ENCODE measurements at regions of chr1 and their contacts with region 1.

Region 1: DNA sequence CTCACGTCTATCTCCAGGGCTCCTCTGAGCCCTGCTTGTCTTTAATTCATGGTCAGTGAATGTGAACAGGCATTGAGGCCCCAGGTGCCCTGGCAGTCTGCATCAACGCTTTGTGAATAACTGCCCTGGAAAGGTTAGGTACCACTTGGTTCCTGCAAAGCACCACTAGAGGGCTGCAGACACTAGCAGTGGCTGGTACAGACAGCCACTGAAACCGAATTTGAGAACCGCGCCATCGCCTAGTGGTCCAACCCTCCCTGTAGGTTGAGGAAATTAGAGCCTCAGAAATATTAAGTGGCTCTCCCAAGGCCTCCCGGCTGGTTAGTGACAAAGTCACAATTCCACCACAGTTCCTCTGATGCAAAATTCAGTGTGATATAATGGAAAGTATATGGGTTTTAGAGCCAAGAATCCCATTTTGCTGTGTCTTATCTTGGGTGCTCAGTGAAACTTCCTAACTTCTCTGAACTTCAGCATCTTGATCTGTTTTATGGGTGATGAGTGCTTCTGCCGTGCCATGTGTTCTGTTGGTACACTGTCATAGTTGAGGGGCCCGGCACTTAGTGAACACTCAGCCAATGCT is 46.2 kb upstream of the BCL9 start:
- DNase-seq: peak; percentile 85
- ATAC-seq: peak; percentile 97

Region 2: GRCh38 chr1:147409886-147410285 is 85.2 kb before region 1 on chr1:
- intact Hi-C with region 1: no loop called
- DNase-seq: no peak
- ATAC-seq: no peak

Region 3: GRCh38 chr1:147630447-147630846 is 135.4 kb after region 1 on chr1:
- intact Hi-C with region 1: loop called (anchors 10 kb)
- DNase-seq: no peak
- ATAC-seq: no peak

Region 4: DNA sequence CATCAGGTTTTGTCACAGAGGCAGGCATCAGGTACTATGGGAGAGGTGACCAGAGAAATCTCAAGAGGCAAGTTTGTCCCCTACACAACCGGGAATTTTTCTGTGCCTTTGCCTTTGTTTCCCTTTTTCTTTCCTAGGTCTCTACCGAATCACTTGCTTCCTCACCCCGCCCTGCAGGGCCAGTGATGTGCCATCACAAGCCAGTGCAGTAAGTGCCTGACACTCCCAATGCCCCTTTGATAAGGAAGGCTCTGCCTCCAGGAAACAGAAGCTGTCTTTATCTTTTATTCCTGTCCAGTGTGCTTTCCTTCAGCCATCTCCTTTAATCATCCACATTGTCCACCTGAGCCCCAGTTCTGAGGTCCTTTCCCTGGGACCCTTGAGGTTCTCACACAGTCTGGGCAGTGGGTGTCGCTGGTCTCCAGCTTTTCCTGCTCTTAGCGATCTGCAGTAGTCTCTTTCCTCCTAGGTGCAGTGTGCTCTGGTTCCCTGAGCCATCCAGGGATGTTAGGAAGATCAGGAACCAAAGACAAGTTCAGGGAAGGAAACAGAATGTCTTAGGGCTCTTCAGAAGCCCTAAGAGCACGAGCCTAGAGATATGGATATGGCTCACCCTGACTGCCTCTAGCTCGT is 228.7 kb after region 1 on chr1:
- intact Hi-C with region 1: no loop called
- DNase-seq: no peak
- ATAC-seq: peak; percentile 55

Measured in sciatic nerve (tissue), 2 donors.